ENCODE measurements at regions of chr6 and their contacts with region 1.

Region 1: GRCh38 chr6:71349976-71350615 is 61.5 kb downstream of the OGFRL1 start:
- DNase-seq: peak; percentile 82
- H3K4me3 ChIP-seq: no peak overlapping the region
- H3K27ac ChIP-seq: peak overlapping the region; percentile 58 to 68 (median 65)
- H3K4me1 ChIP-seq: peaks cover 0 to 28% (median 19%) of the 10 kb centered on the region in 4 donors
- H3K27me3 ChIP-seq: no peaks in the 10 kb centered on the region
- CTCF ChIP-seq: no peak
- EP300 ChIP-seq: peak in 1 of 4 donors; percentile 1
- POLR2A ChIP-seq: no peak

Region 2: DNA sequence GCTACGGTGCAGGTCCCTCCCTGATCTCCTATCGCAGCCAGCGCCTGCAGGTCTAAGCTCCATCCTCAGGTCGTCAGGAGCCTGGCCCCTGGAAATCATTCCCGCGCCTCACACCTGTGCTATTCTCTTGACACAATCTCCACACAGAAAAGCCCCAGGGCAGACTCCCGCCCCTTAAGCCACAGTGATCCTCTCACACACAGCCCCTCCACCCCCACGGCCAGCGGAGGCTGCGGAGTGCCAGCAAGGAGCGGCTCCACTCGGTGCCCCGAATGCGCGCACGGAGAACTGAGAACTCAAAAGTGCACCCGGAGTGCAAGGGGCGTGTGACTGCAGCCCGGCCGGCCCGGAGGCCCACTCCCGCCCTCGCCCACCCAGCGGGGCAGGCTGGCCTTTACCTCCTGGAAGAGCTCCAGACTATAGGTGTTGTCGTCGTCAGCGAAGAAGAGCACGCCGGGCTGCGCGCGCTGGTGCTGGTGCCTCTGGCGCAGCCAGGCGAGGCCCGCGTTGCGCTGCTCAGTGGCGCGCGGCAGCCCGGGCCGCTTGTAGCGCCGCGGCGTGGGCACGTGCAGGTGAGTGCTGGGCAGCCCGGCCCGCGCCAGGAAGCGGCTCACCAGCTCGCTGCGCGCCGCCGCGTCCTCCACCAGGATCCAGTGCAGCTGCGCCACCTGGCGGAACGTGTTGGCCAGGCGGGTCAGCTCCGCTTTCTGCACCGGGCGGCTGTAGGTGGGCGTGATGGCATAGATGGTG is 394.5 kb before region 1 on chr6:
- intact Hi-C with region 1: loop called (anchors 5 kb)
- DNase-seq: peak; percentile 81
- H3K4me3 ChIP-seq: peak overlapping the region; percentile 30 to 58 (median 46)
- H3K27ac ChIP-seq: no peak overlapping the region
- H3K4me1 ChIP-seq: peaks cover 0 to 25% (median 23%) of the 10 kb centered on the region in 4 donors
- H3K27me3 ChIP-seq: peaks cover 10 to 46% (median 19%) of the 10 kb centered on the region in 3 donors
- CTCF ChIP-seq: peak; percentile 35 to 80 (median 58)
- EP300 ChIP-seq: no peak
- POLR2A ChIP-seq: no peak

Region 3: GRCh38 chr6:71190809-71191208 is 159.3 kb before region 1 on chr6:
- intact Hi-C with region 1: loop called (anchors 2 kb)
- DNase-seq: no peak
- H3K4me3 ChIP-seq: no peak overlapping the region
- H3K27ac ChIP-seq: no peak overlapping the region
- H3K4me1 ChIP-seq: no peaks in the 10 kb centered on the region
- H3K27me3 ChIP-seq: no peaks in the 10 kb centered on the region
- CTCF ChIP-seq: peak in 1 of 4 experiments; percentile 6
- EP300 ChIP-seq: no peak
- POLR2A ChIP-seq: no peak

Region 4: DNA sequence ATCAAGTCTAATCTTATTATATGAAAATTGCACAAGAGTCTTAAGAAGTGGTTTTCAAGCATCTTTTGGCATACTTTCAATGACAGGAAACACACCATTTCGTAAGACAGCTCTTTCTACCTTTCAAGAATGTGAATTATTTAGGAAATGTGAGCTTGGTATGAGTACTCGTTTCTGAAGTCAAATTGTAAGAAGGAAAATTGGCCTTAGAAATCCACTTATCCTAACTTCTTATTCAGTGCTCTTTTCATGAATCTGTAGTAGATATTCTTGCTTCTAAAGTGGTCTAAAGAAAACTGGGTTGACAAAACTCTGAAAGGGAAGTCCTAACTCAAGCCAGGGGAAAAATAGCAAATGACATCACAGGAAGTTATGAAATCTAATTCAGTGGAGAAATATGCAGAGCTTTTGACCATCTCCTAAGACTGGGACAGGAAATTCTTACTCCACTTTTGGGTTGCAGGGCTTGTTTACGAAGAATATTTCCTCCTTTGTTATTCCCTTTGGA is 99.9 kb before region 1 on chr6:
- intact Hi-C with region 1: no loop called
- DNase-seq: no peak
- H3K4me3 ChIP-seq: no peak overlapping the region
- H3K27ac ChIP-seq: peak overlapping the region; percentile 41 to 69 (median 62)
- H3K4me1 ChIP-seq: peaks cover 0 to 8% (median 3%) of the 10 kb centered on the region in 4 donors
- H3K27me3 ChIP-seq: no peaks in the 10 kb centered on the region
- CTCF ChIP-seq: no peak
- EP300 ChIP-seq: peak in 1 of 4 donors; percentile 12
- POLR2A ChIP-seq: no peak

Region 5: GRCh38 chr6:71268735-71269437 is 81.2 kb before region 1 on chr6:
- intact Hi-C with region 1: no loop called
- DNase-seq: no peak
- H3K4me3 ChIP-seq: no peak overlapping the region
- H3K27ac ChIP-seq: no peak overlapping the region
- H3K4me1 ChIP-seq: no peaks in the 10 kb centered on the region
- H3K27me3 ChIP-seq: no peaks in the 10 kb centered on the region
- CTCF ChIP-seq: no peak
- EP300 ChIP-seq: no peak
- POLR2A ChIP-seq: no peak

Region 6: GRCh38 chr6:71294121-71294523 is 56.0 kb before region 1 on chr6:
- intact Hi-C with region 1: loop called (anchors 5 kb)
- DNase-seq: no peak
- H3K4me3 ChIP-seq: no peak overlapping the region
- H3K27ac ChIP-seq: no peak overlapping the region
- H3K4me1 ChIP-seq: peaks cover 0 to 17% (median 10%) of the 10 kb centered on the region in 4 donors
- H3K27me3 ChIP-seq: no peaks in the 10 kb centered on the region
- CTCF ChIP-seq: no peak
- EP300 ChIP-seq: no peak
- POLR2A ChIP-seq: no peak

Region 7: GRCh38 chr6:71457929-71458328 is 107.8 kb after region 1 on chr6:
- intact Hi-C with region 1: no loop called
- DNase-seq: no peak
- H3K4me3 ChIP-seq: no peak overlapping the region
- H3K27ac ChIP-seq: no peak overlapping the region
- H3K4me1 ChIP-seq: no peaks in the 10 kb centered on the region
- H3K27me3 ChIP-seq: no peaks in the 10 kb centered on the region
- CTCF ChIP-seq: no peak
- EP300 ChIP-seq: no peak
- POLR2A ChIP-seq: no peak

Measured in sigmoid colon (tissue), 7 donors.